ENCODE measurements at regions of chr13 and their contacts with region 1.

Region 1: GRCh38 chr13:79423801-79424642 is 18.0 kb upstream of the RBM26 start:
- DNase-seq: no peak
- ATAC-seq: peak; percentile 74
- H3K4me3 Mint-ChIP-seq: no peak overlapping the region
- H3K27ac Mint-ChIP-seq: no peak overlapping the region
- H3K4me1 Mint-ChIP-seq: peaks cover 15% of the 10 kb centered on the region
- H3K27me3 Mint-ChIP-seq: no peaks in the 10 kb centered on the region

Region 2: DNA sequence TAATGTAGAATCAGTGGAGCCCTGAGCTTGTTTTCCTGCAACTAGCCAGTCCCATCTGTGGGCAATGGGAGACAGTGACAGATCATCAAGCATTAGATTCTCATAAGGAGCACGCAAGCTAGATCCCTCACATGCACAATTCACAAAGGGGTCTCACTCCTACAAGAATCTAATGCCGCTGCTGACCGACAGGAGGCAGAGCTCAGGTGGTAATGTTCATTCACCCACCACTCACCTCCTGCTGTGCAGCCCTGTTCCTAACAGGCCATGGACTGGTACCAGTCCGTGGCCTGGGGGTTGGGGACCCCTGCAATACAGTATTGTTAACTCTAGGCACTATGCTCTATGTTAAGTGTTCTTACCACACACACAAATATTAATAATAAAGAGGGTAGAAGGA is 380.8 kb before region 1 on chr13:
- CTCF ChIA-PET with region 1: no interaction called
- POLR2A ChIA-PET with region 1: no interaction called
- intact Hi-C with region 1: no loop called
- DNase-seq: no peak
- ATAC-seq: no peak
- H3K4me3 Mint-ChIP-seq: no peak overlapping the region
- H3K27ac Mint-ChIP-seq: no peak overlapping the region
- H3K4me1 Mint-ChIP-seq: no peaks in the 10 kb centered on the region
- H3K27me3 Mint-ChIP-seq: peaks cover 10% of the 10 kb centered on the region

Region 3: DNA sequence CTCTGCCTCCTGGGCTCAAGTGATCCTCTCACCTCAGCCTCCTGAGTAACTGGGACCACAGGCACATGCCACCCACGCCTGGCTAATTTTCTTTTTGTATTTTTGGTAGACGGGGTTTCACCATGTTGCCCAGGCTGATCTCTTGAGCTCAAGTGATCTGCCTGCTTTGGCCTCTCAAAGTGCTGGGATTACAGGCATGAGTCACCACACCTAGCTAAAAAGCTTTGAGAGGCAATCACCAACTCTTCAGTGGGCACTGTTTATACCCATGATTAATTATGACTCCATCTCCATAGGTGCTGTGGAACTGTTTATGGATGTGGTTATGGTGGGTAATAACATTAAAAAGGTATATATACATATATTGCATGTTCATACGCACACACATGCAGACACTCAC is 10.5 kb before region 1 on chr13:
- CTCF ChIA-PET with region 1: interaction called, 19 read pairs
- POLR2A ChIA-PET with region 1: no interaction called
- intact Hi-C with region 1: no loop called
- DNase-seq: no peak
- ATAC-seq: peak; percentile 42
- H3K4me3 Mint-ChIP-seq: no peak overlapping the region
- H3K27ac Mint-ChIP-seq: no peak overlapping the region
- H3K4me1 Mint-ChIP-seq: peaks cover 5% of the 10 kb centered on the region
- H3K27me3 Mint-ChIP-seq: no peaks in the 10 kb centered on the region

Region 4: GRCh38 chr13:79440958-79441528 is 17.0 kb after region 1 on chr13:
- CTCF ChIA-PET with region 1: interaction called, 24 read pairs
- POLR2A ChIA-PET with region 1: no interaction called
- intact Hi-C with region 1: no loop called
- DNase-seq: no peak
- ATAC-seq: no peak
- H3K4me3 Mint-ChIP-seq: no peak overlapping the region
- H3K27ac Mint-ChIP-seq: no peak overlapping the region
- H3K4me1 Mint-ChIP-seq: peaks cover 17% of the 10 kb centered on the region
- H3K27me3 Mint-ChIP-seq: no peaks in the 10 kb centered on the region

Region 5: GRCh38 chr13:79451500-79451962 is 27.5 kb after region 1 on chr13:
- CTCF ChIA-PET with region 1: interaction called, 15 read pairs
- POLR2A ChIA-PET with region 1: no interaction called
- intact Hi-C with region 1: no loop called
- DNase-seq: peak; percentile 97
- ATAC-seq: peak; percentile 97
- H3K4me3 Mint-ChIP-seq: peak overlapping the region; percentile 75
- H3K27ac Mint-ChIP-seq: peak overlapping the region; percentile 99
- H3K4me1 Mint-ChIP-seq: peaks cover 81% of the 10 kb centered on the region
- H3K27me3 Mint-ChIP-seq: no peaks in the 10 kb centered on the region

Region 6: DNA sequence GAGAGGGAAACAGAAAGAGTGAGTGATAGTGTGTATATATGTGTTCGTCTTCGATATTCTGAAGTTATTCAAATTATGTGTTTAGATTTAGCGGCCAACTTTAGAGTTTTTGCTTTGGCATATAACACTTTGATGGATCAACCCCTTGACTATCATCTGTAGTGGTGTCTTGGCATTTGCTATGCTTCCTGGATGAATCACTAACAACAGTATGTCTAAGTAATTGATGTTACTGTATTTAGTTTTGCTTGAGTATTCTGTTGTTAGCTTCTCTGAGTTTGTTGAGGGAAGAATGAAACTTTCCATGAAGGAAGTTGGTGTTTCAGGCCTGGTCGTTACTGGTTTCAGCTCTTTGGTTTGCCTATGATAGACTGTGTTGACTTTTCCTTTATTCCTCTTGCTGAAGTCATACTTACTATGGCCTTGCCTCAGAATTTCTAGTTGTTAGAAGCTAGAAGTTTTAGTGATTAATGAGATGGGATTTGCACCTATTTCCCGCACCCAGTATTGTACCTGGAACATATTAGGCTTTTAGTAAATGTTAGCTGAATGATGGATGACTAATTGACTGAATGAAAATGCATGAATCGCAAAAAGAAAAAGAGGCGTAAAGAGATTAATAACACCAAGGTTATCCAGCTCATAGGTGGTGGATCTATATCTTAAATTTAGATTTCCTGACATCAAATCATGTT is 77.7 kb after region 1 on chr13:
- CTCF ChIA-PET with region 1: interaction called, 30 read pairs
- POLR2A ChIA-PET with region 1: interaction called, 3 read pairs
- intact Hi-C with region 1: no loop called
- DNase-seq: no peak
- ATAC-seq: peak; percentile 68
- H3K4me3 Mint-ChIP-seq: peak overlapping the region; percentile 32
- H3K27ac Mint-ChIP-seq: peak overlapping the region; percentile 87
- H3K4me1 Mint-ChIP-seq: peaks cover 90% of the 10 kb centered on the region
- H3K27me3 Mint-ChIP-seq: no peaks in the 10 kb centered on the region

Region 7: DNA sequence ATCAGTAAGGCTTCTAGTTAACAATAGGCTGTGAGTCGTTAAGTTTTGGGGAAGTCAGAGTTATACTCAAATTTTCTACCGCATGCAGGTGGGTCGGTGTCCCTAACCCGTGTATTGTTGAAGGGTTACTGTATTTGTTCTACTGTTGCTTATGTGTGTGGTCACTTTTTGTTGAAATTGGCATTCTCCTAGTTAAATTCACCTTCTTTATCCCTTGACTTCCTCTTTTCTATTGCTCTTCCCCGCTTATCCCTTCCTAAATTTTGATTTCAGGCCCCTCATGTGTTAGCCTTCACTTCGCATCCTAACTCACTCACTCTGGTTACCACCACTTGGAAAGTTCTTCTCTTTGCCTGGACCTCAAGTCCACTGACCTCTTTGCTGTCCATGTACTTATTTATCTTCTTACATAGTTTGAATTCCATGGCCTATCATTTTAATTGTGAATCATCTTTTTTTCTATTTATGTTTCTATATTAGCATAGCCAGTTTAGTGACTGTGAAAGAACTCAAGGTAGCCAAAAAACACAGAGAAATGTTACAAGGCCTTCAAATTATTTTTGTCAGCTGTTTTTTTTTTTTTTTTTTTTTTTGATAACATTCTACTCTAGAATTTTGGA is 109.9 kb after region 1 on chr13:
- CTCF ChIA-PET with region 1: interaction called, 366 read pairs
- POLR2A ChIA-PET with region 1: no interaction called
- intact Hi-C with region 1: no loop called
- DNase-seq: no peak
- ATAC-seq: no peak
- H3K4me3 Mint-ChIP-seq: no peak overlapping the region
- H3K27ac Mint-ChIP-seq: peak overlapping the region; percentile 44
- H3K4me1 Mint-ChIP-seq: peaks cover 30% of the 10 kb centered on the region
- H3K27me3 Mint-ChIP-seq: no peaks in the 10 kb centered on the region

Region 8: DNA sequence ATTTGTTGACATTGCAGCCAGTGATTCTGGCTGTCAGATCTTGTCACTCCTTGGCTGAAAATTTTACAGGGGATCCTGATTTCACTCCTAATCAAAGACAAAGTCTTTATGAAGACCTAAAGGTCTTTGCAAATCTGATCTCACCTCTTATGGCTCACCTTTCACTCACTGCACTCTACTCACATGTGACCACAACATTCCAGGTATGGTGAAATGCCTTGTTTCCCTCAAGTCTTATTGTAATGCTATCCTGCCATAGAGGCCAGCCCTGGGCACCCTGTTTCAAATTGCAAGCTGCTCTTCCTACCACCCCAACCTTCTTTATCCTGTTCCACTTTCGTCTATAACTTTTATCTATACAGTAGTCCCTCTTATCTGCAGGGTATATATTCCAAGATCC is 257.0 kb after region 1 on chr13:
- CTCF ChIA-PET with region 1: no interaction called
- POLR2A ChIA-PET with region 1: no interaction called
- intact Hi-C with region 1: no loop called
- DNase-seq: no peak
- ATAC-seq: no peak
- H3K4me3 Mint-ChIP-seq: no peak overlapping the region
- H3K27ac Mint-ChIP-seq: no peak overlapping the region
- H3K4me1 Mint-ChIP-seq: no peaks in the 10 kb centered on the region
- H3K27me3 Mint-ChIP-seq: peaks cover 8% of the 10 kb centered on the region

Region 9: GRCh38 chr13:79874396-79875360 is 450.7 kb after region 1 on chr13:
- CTCF ChIA-PET with region 1: no interaction called
- POLR2A ChIA-PET with region 1: no interaction called
- intact Hi-C with region 1: no loop called
- DNase-seq: peak; percentile 10
- ATAC-seq: peak; percentile 81
- H3K4me3 Mint-ChIP-seq: no peak overlapping the region
- H3K27ac Mint-ChIP-seq: no peak overlapping the region
- H3K4me1 Mint-ChIP-seq: no peaks in the 10 kb centered on the region
- H3K27me3 Mint-ChIP-seq: no peaks in the 10 kb centered on the region

Measured in activated CD4-positive, alpha-beta T cell treated with anti-CD3 and anti-CD28 coated beads for 36 hours (primary cell).